MCF 10A (cell line): ENCODE measurements at regions of chr5 and their contacts with region 1.

Region 1: DNA sequence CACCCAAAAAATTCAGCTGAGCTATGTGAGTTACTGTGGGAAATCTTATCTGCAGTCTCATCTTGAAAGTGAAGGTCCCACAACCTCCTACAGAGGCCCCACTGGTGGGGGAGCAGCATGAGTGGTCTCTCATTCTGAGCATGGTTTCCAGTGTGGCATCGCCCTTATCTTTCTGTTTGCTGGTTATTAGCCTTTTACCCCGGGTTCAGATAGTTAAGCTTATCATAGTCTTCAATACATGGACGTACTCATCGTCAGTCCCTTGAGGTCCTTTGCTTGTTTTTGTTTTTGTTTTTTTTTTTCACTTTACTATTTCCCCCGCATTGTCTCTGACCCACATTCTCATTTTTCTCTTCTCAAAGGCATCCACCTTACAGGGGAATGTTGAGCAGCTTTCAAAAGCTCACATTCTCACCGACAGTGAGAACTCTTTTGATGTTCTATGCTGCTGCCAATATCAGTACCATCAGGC is 7.7 kb upstream of the HAVCR2 start:
- DNase-seq: no peak
- H3K4me3 Mint-ChIP-seq: no peak overlapping the region
- H3K27ac Mint-ChIP-seq: no peak overlapping the region
- H3K4me1 Mint-ChIP-seq: no peaks in the 10 kb centered on the region
- H3K27me3 Mint-ChIP-seq: no peaks in the 10 kb centered on the region
- CTCF ChIP-seq: no peak

Region 2: DNA sequence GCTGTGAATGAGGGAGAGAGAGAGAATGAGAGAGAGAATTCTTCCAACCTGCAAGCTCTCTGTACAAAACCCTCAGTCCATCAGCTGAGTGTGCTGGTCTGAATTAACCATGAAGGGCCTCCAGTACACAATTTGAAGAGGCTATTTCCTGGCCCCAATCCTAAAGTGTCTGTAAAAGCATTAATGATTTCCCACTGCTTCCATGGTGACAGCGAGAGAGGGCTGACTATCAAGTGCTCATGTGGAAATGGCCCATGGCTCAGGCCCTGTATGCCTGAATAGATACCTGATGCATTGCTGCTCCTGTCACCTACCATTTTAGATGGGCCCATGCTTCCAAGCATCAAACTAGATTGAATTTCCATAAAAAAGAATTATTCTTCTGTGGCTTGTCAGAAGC is 1510.6 kb before region 1 on chr5:
- CTCF ChIA-PET with region 1: no interaction called
- POLR2A ChIA-PET with region 1: no interaction called
- intact Hi-C with region 1: loop called (anchors 5 kb)
- DNase-seq: no peak
- H3K4me3 Mint-ChIP-seq: no peak overlapping the region
- H3K27ac Mint-ChIP-seq: no peak overlapping the region
- H3K4me1 Mint-ChIP-seq: no peaks in the 10 kb centered on the region
- H3K27me3 Mint-ChIP-seq: no peaks in the 10 kb centered on the region
- CTCF ChIP-seq: no peak

Region 3: GRCh38 chr5:157189223-157189622 is 72.7 kb after region 1 on chr5:
- CTCF ChIA-PET with region 1: no interaction called
- POLR2A ChIA-PET with region 1: no interaction called
- intact Hi-C with region 1: no loop called
- DNase-seq: no peak
- H3K4me3 Mint-ChIP-seq: no peak overlapping the region
- H3K27ac Mint-ChIP-seq: no peak overlapping the region
- H3K4me1 Mint-ChIP-seq: no peaks in the 10 kb centered on the region
- H3K27me3 Mint-ChIP-seq: peaks cover 10% of the 10 kb centered on the region
- CTCF ChIP-seq: no peak